Adrenal gland (tissue), 19 donors: ENCODE measurements at regions of chr6 and their contacts with region 1.

Region 1: GRCh38 chr6:11064836-11065235 is 20.7 kb upstream of the ELOVL2 start:
- DNase-seq: no peak
- H3K4me3 ChIP-seq: no peak overlapping the region
- H3K27ac ChIP-seq: no peak overlapping the region
- H3K4me1 ChIP-seq: no peaks in the 10 kb centered on the region
- H3K27me3 ChIP-seq: no peaks in the 10 kb centered on the region
- CTCF ChIP-seq: no peak
- POLR2A ChIP-seq: no peak

Region 2: GRCh38 chr6:10478187-10479040 is 586.4 kb before region 1 on chr6:
- intact Hi-C with region 1: loop called in 1 of 2 experiments (anchors 5 kb)
- DNase-seq: no peak
- H3K4me3 ChIP-seq: no peak overlapping the region
- H3K27ac ChIP-seq: no peak overlapping the region
- H3K4me1 ChIP-seq: no peaks in the 10 kb centered on the region
- H3K27me3 ChIP-seq: no peaks in the 10 kb centered on the region
- CTCF ChIP-seq: peak; percentile 38 to 65 (median 52)
- POLR2A ChIP-seq: no peak

Region 3: DNA sequence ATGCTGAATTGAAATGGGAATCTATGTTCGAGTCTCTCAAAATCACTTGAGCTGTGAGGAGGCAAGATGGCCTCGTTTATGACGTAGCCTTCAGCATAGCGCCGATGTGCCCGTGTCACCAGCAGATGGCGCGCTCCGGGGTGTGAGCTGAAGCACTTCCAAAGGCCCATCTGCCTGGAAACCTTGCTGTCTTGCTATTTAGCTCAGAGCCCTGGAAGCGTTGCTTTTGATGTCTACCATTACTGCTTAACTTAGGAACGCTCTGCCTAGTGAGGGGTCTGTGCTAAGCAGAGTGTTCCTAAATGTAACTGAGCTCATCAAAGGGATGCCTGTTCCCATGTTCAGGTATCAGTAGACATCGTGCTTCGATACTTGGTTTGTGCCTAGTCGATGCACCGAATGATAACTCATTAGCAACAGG is 110.2 kb before region 1 on chr6:
- intact Hi-C with region 1: loop called (anchors 5 kb)
- DNase-seq: peak; percentile 63 to 87 (median 76)
- H3K4me3 ChIP-seq: no peak overlapping the region
- H3K27ac ChIP-seq: no peak overlapping the region
- H3K4me1 ChIP-seq: no peaks in the 10 kb centered on the region
- H3K27me3 ChIP-seq: no peaks in the 10 kb centered on the region
- CTCF ChIP-seq: peak; percentile 56 to 73 (median 69)
- POLR2A ChIP-seq: no peak

Region 4: GRCh38 chr6:11097476-11097875 is 32.6 kb after region 1 on chr6:
- intact Hi-C with region 1: no loop called
- DNase-seq: peak in 1 of 7 donors; percentile 24
- H3K4me3 ChIP-seq: no peak overlapping the region
- H3K27ac ChIP-seq: no peak overlapping the region
- H3K4me1 ChIP-seq: peaks cover 9 to 26% of the 10 kb centered on the region in 2 donors
- H3K27me3 ChIP-seq: no peaks in the 10 kb centered on the region
- CTCF ChIP-seq: no peak
- POLR2A ChIP-seq: no peak

Region 5: GRCh38 chr6:11439017-11439420 is 374.2 kb after region 1 on chr6:
- intact Hi-C with region 1: no loop called
- DNase-seq: peak in 1 of 7 donors; percentile 13
- H3K4me3 ChIP-seq: no peak overlapping the region
- H3K27ac ChIP-seq: peak overlapping the region in 3 of 5 donors; percentile 21 to 42 (median 22)
- H3K4me1 ChIP-seq: peaks cover 0 to 12% of the 10 kb centered on the region in 2 donors
- H3K27me3 ChIP-seq: no peaks in the 10 kb centered on the region
- CTCF ChIP-seq: no peak
- POLR2A ChIP-seq: no peak

Region 6: GRCh38 chr6:11467364-11467763 is 402.5 kb after region 1 on chr6:
- intact Hi-C with region 1: no loop called
- DNase-seq: no peak
- H3K4me3 ChIP-seq: no peak overlapping the region
- H3K27ac ChIP-seq: no peak overlapping the region
- H3K4me1 ChIP-seq: no peaks in the 10 kb centered on the region
- H3K27me3 ChIP-seq: no peaks in the 10 kb centered on the region
- CTCF ChIP-seq: no peak
- POLR2A ChIP-seq: no peak